Colonic mucosa (tissue), 4 donors: ENCODE measurements at regions of chr7 and their contacts with region 1.

Region 1: GRCh38 chr7:64618785-64619456 is 47.0 kb upstream of the ZNF107 start:
- DNase-seq: peak; percentile 21
- H3K4me3 ChIP-seq: no peak overlapping the region
- H3K27ac ChIP-seq: no peak overlapping the region
- H3K4me1 ChIP-seq: no peaks in the 10 kb centered on the region
- H3K27me3 ChIP-seq: no peaks in the 10 kb centered on the region
- CTCF ChIP-seq: peak; percentile 35

Region 2: GRCh38 chr7:64183126-64183742 is 435.7 kb before region 1 on chr7:
- intact Hi-C with region 1: loop called (anchors 5 kb)
- DNase-seq: no peak
- H3K4me3 ChIP-seq: no peak overlapping the region
- H3K27ac ChIP-seq: no peak overlapping the region
- H3K4me1 ChIP-seq: no peaks in the 10 kb centered on the region
- H3K27me3 ChIP-seq: no peaks in the 10 kb centered on the region
- CTCF ChIP-seq: peak; percentile 25